PC-3 (cell line): ENCODE measurements at regions of chr3 and their contacts with region 1.

Region 1: DNA sequence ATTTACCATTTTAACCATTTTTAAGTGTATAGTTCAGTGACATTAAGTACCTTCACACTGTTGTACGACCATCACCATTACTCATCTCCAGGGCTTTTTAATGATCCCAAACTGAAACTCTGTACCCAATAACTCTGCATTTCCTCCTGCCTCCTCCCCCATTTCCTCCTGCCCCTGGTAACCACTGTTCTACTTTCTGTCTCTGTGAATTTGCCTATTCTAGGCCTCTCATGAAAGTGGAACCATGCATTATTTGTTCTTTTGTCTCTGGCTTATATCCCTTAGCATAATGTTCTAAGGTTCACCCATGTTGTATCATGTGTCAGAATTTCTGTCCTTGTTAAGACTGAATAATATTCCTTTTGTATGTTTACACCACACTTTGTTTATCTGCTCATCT is 154.2 kb downstream of the MECOM start:
- DNase-seq: no peak
- ATAC-seq: no peak; the same call in 1 of the 2 replicates
- H3K4me3 ChIP-seq: no peak overlapping the region
- H3K27ac ChIP-seq: no peak overlapping the region
- H3K4me1 ChIP-seq: no peaks in the 10 kb centered on the region
- H3K27me3 ChIP-seq: no peaks in the 10 kb centered on the region
- CTCF ChIP-seq: no peak

Region 2: DNA sequence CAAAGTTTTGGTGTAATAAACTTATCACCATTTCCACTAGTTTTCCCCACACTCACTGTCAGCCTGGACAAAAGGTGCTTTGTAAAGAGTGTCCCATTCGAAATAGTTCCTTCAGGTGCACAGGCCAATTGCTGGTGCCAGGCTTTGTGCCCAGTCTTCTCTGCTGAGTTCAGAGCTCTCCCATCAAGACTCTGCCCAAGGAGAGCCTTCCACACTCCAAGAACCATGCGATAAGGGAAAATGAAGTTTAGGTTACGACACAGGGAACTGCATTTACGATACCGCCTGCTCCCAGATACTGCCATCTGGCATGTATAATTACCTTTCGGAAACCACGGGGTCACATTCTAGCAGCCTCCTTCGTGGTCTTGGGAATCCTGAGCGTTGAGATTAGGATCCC is 225.4 kb before region 1 on chr3:
- CTCF ChIA-PET with region 1: no interaction called
- POLR2A ChIA-PET with region 1: no interaction called
- intact Hi-C with region 1: loop called (anchors 5 kb)
- DNase-seq: no peak
- ATAC-seq: no peak
- H3K4me3 ChIP-seq: no peak overlapping the region
- H3K27ac ChIP-seq: no peak overlapping the region
- H3K4me1 ChIP-seq: peaks cover 35% of the 10 kb centered on the region
- H3K27me3 ChIP-seq: no peaks in the 10 kb centered on the region
- CTCF ChIP-seq: no peak

Region 3: GRCh38 chr3:169390271-169391230 is 118.8 kb before region 1 on chr3:
- CTCF ChIA-PET with region 1: no interaction called
- POLR2A ChIA-PET with region 1: no interaction called
- intact Hi-C with region 1: loop called (anchors 2 kb)
- DNase-seq: peak; percentile 57
- ATAC-seq: peak; percentile 87
- H3K4me3 ChIP-seq: no peak overlapping the region
- H3K27ac ChIP-seq: no peak overlapping the region
- H3K4me1 ChIP-seq: 0 out of 2 replicates have a peak, but pooled peaks cover 11% of the 10 kb centered on the region
- H3K27me3 ChIP-seq: no peaks in the 10 kb centered on the region
- CTCF ChIP-seq: peak; percentile 59